Adrenal gland (tissue), 19 donors: ENCODE measurements at regions of chr2 and their contacts with region 1.

Region 1: GRCh38 chr2:27703638-27704341 is 40.1 kb downstream of the SLC4A1AP start:
- DNase-seq: peak; percentile 87 to 96 (median 89)
- H3K4me3 ChIP-seq: no peak overlapping the region
- H3K27ac ChIP-seq: peak overlapping the region in 3 of 5 donors; percentile 51 to 85 (median 54)
- H3K4me1 ChIP-seq: peaks cover 22 to 37% of the 10 kb centered on the region in 2 donors
- H3K27me3 ChIP-seq: no peaks in the 10 kb centered on the region
- CTCF ChIP-seq: peak; percentile 93 to 98 (median 95)
- POLR2A ChIP-seq: no peak

Region 2: GRCh38 chr2:27380626-27381545 is 322.9 kb before region 1 on chr2 and contains the start of gene ZNF513:
- intact Hi-C with region 1: no loop called
- DNase-seq: peak; percentile 96 to 98 (median 98)
- H3K4me3 ChIP-seq: peak within 1 kb of the TSS; percentile 5 to 81 (median 42)
- H3K27ac ChIP-seq: peak within 1 kb of the TSS; percentile 58 to 94 (median 85)
- H3K4me1 ChIP-seq: peaks cover 4 to 23% of the 10 kb centered on the region in 2 donors
- H3K27me3 ChIP-seq: no peaks in the 10 kb centered on the region
- CTCF ChIP-seq: no peak
- POLR2A ChIP-seq: peak; percentile 30 to 81
- total RNA-seq, gene ZNF513: 3.1 to 29.2 (median 15.6) TPM

Region 3: GRCh38 chr2:27552941-27553340 is 150.8 kb before region 1 on chr2:
- intact Hi-C with region 1: no loop called
- DNase-seq: no peak
- H3K4me3 ChIP-seq: no peak overlapping the region
- H3K27ac ChIP-seq: no peak overlapping the region
- H3K4me1 ChIP-seq: no peaks in the 10 kb centered on the region
- H3K27me3 ChIP-seq: no peaks in the 10 kb centered on the region
- CTCF ChIP-seq: no peak
- POLR2A ChIP-seq: no peak

Region 4: GRCh38 chr2:27954771-27955383 is 251.1 kb after region 1 on chr2:
- intact Hi-C with region 1: no loop called
- DNase-seq: peak; percentile 60 to 88 (median 78)
- H3K4me3 ChIP-seq: peak overlapping the region in 1 of 4 donors; percentile 8
- H3K27ac ChIP-seq: peak overlapping the region; percentile 49 to 79 (median 72)
- H3K4me1 ChIP-seq: peaks cover 43 to 82% of the 10 kb centered on the region in 2 donors
- H3K27me3 ChIP-seq: no peaks in the 10 kb centered on the region
- CTCF ChIP-seq: peak in 5 of 6 experiments; percentile 36 to 50 (median 42)
- POLR2A ChIP-seq: peak in 1 of 2 donors; percentile 44

Region 5: DNA sequence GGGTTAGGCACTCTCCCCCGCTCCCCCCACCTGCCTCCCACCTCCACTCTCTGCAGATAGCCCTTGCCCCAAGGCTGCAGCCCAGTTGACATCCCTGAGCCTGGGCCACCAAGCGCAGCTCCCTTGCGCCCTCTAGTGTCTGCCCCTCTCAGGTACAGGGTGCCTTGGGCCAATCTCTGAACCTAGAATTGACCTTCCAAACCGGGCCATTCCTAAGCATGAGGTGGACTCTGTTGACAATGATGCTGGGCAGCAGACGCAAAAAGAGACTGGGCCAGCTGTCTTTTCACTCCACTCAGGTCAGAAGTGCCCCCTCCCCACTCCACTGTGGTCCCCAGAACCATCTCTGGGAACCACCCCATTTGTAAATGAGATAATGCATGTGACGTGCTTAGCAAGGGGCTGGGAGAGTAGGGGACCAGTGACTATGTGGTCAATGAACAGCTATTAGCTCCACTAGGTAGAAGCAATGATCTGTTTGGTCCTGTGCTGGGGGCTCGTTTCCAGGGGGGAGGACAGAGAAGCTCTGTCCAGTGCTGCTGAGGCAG is 748.8 kb after region 1 on chr2:
- intact Hi-C with region 1: loop called in 1 of 2 experiments (anchors 5 kb)
- DNase-seq: peak; percentile 79 to 91 (median 83)
- H3K4me3 ChIP-seq: no peak overlapping the region
- H3K27ac ChIP-seq: no peak overlapping the region
- H3K4me1 ChIP-seq: peaks cover 10 to 11% of the 10 kb centered on the region in 2 donors
- H3K27me3 ChIP-seq: no peaks in the 10 kb centered on the region
- CTCF ChIP-seq: peak; percentile 89 to 95 (median 92)
- POLR2A ChIP-seq: no peak